Activated naive CD4-positive, alpha-beta T cell treated with anti-CD3 and anti-CD28 coated beads for 36 hours (primary cell): ENCODE measurements at regions of chr1 and their contacts with region 1.

Region 1: GRCh38 chr1:108559215-108560186 is at the start of gene EEIG2:
- DNase-seq: peak; percentile 92
- H3K4me3 Mint-ChIP-seq: peak within 1 kb of the TSS; percentile 94
- H3K27ac Mint-ChIP-seq: peak within 1 kb of the TSS; percentile 81
- H3K4me1 Mint-ChIP-seq: peaks cover 29% of the 10 kb centered on the region
- H3K27me3 Mint-ChIP-seq: no peaks in the 10 kb centered on the region
- total RNA-seq, gene EEIG2: 7.6 to 7.9 TPM

Region 2: DNA sequence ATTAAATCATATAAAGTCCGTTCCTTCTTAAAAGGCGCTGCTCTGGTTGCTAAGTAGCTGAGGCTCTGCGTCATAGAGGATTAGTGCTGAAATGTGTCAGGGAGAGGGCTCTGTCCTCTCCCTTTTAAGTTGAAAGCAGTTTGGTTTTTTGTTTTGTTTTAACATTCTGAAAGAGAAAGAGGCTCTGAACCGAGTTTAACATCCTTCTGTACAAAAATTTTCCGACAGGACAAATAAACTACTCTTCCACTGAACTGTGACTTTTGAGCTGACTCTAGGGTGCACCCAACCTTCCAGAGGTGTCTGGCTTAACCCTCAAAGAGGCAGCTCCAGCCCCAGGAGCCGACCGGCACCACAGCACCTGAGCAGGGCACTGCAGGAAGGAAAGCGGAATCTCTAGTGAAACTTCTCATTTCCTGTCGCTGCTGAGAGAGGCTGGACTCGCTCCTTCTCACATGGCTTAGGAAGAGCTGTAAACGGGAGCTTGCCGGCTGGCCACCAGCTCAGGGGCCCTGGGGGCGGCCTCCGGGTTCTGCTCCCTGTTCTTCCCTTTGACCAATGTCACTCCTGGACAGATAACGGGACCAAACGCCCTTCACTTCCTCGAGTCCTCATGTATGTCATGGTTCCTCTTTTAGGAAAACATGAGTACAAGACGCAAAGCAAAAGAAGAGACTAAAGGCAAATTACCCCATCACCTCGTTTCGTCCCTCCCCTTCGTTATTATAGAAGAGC is 595.7 kb before region 1 on chr1:
- CTCF ChIA-PET with region 1: no interaction called
- intact Hi-C with region 1: loop called (anchors 5 kb)
- DNase-seq: peak; percentile 73
- H3K4me3 Mint-ChIP-seq: peak overlapping the region; percentile 87
- H3K27ac Mint-ChIP-seq: peak overlapping the region; percentile 96
- H3K4me1 Mint-ChIP-seq: peaks cover 25% of the 10 kb centered on the region
- H3K27me3 Mint-ChIP-seq: no peaks in the 10 kb centered on the region

Region 3: GRCh38 chr1:108503076-108503740 is 56.3 kb before region 1 on chr1:
- CTCF ChIA-PET with region 1: interaction called, 13 read pairs
- intact Hi-C with region 1: loop called (anchors 2 kb)
- DNase-seq: no peak
- H3K4me3 Mint-ChIP-seq: no peak overlapping the region
- H3K27ac Mint-ChIP-seq: no peak overlapping the region
- H3K4me1 Mint-ChIP-seq: no peaks in the 10 kb centered on the region
- H3K27me3 Mint-ChIP-seq: peaks cover 26% of the 10 kb centered on the region

Region 4: DNA sequence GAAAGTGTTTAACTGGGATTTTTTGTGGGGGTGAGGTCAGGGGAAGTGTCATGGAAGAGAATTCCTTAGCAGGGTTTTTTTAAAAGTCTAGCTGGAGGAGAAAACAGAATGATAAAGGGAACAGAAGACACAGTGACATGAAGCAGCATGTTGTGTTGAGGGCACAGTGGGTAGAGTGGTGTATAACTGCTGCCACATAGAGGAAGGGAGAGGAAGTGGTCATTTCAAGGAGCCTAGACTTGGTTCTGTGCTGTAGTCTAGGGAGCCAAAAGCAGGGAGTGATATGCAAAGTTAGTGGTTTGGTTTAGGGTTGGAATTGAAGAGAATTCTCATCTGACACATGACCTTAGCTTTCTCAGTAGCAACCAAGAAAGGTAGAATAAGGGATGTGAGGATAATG is 10.6 kb after region 1 on chr1:
- CTCF ChIA-PET with region 1: interaction called, 32 read pairs
- intact Hi-C with region 1: no loop called
- DNase-seq: peak; percentile 41
- H3K4me3 Mint-ChIP-seq: no peak overlapping the region
- H3K27ac Mint-ChIP-seq: no peak overlapping the region
- H3K4me1 Mint-ChIP-seq: no peaks in the 10 kb centered on the region
- H3K27me3 Mint-ChIP-seq: no peaks in the 10 kb centered on the region

Region 5: GRCh38 chr1:108605633-108606032 is 46.1 kb after region 1 on chr1:
- CTCF ChIA-PET with region 1: no interaction called
- intact Hi-C with region 1: no loop called
- DNase-seq: no peak
- H3K4me3 Mint-ChIP-seq: no peak overlapping the region
- H3K27ac Mint-ChIP-seq: no peak overlapping the region
- H3K4me1 Mint-ChIP-seq: no peaks in the 10 kb centered on the region
- H3K27me3 Mint-ChIP-seq: no peaks in the 10 kb centered on the region

Region 6: GRCh38 chr1:108671143-108671542 is 111.6 kb after region 1 on chr1:
- CTCF ChIA-PET with region 1: no interaction called
- intact Hi-C with region 1: no loop called
- DNase-seq: no peak
- H3K4me3 Mint-ChIP-seq: no peak overlapping the region
- H3K27ac Mint-ChIP-seq: no peak overlapping the region
- H3K4me1 Mint-ChIP-seq: peaks cover 11% of the 10 kb centered on the region
- H3K27me3 Mint-ChIP-seq: no peaks in the 10 kb centered on the region

Region 7: DNA sequence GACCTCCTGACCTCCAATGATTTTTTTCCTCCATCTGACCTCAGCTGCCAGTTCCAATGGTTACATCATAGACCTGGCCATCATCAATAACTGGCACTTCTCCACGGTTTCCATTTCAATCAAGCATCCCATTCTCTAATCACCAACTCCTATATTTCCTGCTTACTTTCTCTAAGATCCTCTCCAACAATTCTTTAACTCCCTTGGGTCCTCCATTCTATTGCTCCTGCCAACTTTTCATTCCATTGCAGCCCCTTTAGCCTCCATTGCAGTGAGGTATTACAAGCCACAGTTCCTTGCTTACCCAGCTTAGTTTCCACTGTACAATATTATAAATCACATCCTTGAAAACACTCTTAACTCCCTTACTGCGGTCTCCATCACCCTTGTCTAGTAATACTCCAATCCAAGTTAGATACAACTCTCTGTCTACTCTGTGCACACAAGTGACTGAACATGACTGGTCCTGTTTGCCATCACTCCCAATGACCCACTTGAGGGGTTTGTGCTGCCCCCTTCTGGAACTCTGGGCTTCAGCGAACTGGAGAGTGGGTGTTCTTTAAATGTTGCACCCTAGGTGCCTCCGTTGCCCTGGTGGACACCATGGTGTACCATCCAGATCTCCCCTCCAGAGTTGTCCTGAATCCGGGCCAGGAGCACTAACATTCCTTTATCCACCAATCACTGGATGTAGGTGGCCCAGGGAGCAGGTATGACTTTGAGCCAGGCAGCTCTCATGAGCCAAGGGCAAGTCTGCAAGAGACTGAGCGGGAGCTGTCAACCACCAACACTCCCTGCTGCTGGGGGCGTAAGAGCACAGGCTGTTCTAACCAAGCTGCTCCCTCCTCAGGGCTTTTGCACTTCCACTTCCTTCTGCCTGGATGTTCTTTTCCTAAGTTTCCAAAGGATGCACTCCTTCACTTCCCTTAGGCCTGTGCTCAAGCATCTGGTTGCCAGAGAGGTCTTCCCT is 149.5 kb after region 1 on chr1:
- CTCF ChIA-PET with region 1: interaction called, 3 read pairs
- intact Hi-C with region 1: loop called (anchors 2 kb)
- DNase-seq: peak; percentile 81
- H3K4me3 Mint-ChIP-seq: no peak overlapping the region
- H3K27ac Mint-ChIP-seq: no peak overlapping the region
- H3K4me1 Mint-ChIP-seq: peaks cover 11% of the 10 kb centered on the region
- H3K27me3 Mint-ChIP-seq: no peaks in the 10 kb centered on the region

Region 8: DNA sequence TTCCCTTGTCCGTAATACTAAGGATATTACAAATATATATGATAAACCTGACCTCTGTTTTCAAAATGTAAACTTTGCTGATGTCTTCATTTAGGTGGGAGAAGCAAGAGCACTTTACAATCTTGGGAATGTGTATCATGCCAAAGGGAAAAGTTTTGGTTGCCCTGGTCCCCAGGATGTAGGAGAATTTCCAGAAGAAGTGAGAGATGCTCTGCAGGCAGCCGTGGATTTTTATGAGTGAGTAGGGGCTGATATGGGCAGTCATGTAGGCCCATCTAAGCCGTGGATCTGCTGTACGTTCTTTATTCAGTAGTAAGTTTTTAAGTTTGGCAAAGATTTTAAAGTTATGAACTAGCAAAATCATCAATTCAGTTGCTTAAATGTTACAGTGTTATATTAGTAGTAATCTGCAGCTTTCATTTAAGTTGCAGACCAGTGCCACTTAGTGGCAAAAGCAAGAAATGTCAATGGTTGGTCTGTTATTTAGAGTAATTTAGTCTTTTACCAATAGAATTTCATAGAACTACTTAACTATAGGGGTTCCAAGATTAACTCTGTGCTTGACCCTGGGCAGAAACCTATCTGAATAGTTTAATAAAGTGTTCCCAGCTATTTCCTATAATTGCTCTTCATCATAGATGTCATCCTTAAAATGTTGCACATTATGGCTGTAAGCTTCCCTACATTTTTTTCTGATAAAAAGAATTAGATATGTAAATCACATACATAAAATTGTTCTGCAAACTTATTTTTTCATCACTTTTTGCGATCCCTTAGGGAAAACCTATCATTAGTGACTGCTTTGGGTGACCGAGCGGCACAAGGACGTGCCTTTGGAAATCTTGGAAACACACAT is 338.6 kb after region 1 on chr1:
- CTCF ChIA-PET with region 1: interaction called, 4 read pairs
- intact Hi-C with region 1: loop called (anchors 5 kb)
- DNase-seq: peak; percentile 43
- H3K4me3 Mint-ChIP-seq: no peak overlapping the region
- H3K27ac Mint-ChIP-seq: no peak overlapping the region
- H3K4me1 Mint-ChIP-seq: no peaks in the 10 kb centered on the region
- H3K27me3 Mint-ChIP-seq: peaks cover 2% of the 10 kb centered on the region